Right ventricle myocardium superior (tissue), 1 donor: ENCODE measurements at regions of chr6 and their contacts with region 1.

Region 1: GRCh38 chr6:17392978-17393891 is at the start of gene CAP2:
- DNase-seq: peak; percentile 77
- ATAC-seq: peak; percentile 93
- total RNA-seq, gene CAP2: 118 TPM

Region 2: DNA sequence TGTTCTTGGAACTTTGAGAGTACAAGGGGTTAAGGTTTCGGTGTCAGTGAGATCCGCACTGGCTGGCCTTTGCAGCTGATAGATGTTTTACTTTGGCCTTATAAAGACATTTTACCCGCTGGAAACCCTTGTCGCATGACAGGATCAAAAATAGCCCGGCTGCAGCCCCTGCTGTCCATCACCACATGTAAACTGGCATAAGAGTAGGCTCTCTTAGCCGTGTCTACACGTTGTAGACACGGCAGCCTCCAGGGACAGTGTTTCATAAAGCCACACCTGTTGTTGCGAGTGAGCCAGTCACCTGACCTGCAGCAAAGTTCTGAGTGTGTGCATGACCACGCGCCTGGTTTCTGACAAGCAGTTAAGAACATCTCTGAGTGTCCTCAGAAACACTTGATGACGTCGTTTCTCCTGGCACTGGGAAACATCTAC is 103.6 kb before region 1 on chr6:
- intact Hi-C with region 1: loop called (anchors 10 kb)
- DNase-seq: peak; percentile 74
- ATAC-seq: peak; percentile 89